ENCODE measurements at regions of chr1 and their contacts with region 1.

Region 1: DNA sequence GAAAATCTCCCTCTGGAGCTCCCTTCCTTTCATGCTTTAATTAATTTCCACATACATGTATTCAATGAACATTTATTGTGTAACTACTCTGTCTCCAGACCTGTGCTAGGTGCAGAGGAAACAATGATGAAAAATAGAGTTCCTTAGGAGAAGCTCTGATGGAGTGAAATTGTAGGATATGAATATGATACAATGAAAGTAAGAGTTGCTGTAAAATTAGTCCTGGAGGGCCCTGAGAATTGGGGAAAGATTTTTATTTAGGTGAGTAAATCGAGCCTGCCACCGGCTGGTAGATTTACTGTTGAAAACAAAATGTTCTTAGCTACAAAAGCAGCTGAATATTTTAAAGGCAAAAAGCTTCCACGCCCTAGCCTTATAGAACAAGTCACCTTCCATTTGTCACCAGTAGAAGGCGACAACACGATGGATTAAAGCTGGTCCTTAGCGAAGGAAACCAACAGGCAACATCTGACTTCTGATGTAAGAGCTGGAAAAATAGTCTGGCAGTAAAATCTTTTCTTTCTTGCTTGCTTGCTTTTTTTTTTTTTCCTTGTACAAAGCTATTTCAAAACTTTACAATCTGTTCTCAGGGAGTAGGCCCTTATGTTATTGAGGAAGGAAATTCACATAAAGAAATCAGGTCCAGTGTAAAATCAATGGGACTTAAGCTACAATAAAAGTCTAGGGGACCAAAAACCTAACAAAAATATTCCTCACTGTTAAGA is 82.0 kb upstream of the ROR1 start:
- DNase-seq: peak; percentile 88
- H3K4me3 Mint-ChIP-seq: no peak overlapping the region
- H3K27ac Mint-ChIP-seq: peak overlapping the region; percentile 28
- H3K4me1 Mint-ChIP-seq: peaks cover 17% of the 10 kb centered on the region
- H3K27me3 Mint-ChIP-seq: no peaks in the 10 kb centered on the region
- CTCF ChIP-seq: peak; percentile 63

Region 2: DNA sequence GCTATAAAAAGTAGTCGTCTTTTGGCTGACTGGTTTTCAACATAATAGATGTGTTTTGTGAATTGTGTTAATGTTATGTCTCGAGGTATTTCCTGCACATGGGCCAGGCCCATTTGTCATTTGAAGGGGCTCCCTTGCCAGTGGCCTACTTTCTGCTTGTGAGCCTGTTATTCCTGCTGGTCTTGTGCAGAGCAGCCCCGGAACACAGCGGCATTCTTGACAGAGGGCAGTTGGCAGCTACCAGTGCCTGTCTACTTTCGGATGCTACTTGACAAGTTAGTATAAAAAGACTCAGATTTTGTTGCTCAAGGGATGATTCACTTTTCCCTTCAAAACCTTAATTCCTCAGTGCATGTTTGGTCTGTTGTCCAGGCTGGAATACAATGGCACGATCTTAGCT is 70.2 kb before region 1 on chr1:
- CTCF ChIA-PET with region 1: interaction called, 15 read pairs
- POLR2A ChIA-PET with region 1: no interaction called
- intact Hi-C with region 1: no loop called
- DNase-seq: no peak
- H3K4me3 Mint-ChIP-seq: no peak overlapping the region
- H3K27ac Mint-ChIP-seq: no peak overlapping the region
- H3K4me1 Mint-ChIP-seq: peaks cover 27% of the 10 kb centered on the region
- H3K27me3 Mint-ChIP-seq: no peaks in the 10 kb centered on the region
- CTCF ChIP-seq: no peak

Region 3: GRCh38 chr1:63674238-63674864 is 17.5 kb before region 1 on chr1:
- CTCF ChIA-PET with region 1: interaction called, 15 read pairs
- POLR2A ChIA-PET with region 1: no interaction called
- intact Hi-C with region 1: no loop called
- DNase-seq: peak; percentile 90
- H3K4me3 Mint-ChIP-seq: no peak overlapping the region
- H3K27ac Mint-ChIP-seq: no peak overlapping the region
- H3K4me1 Mint-ChIP-seq: peaks cover 11% of the 10 kb centered on the region
- H3K27me3 Mint-ChIP-seq: no peaks in the 10 kb centered on the region
- CTCF ChIP-seq: peak; percentile 58

Region 4: DNA sequence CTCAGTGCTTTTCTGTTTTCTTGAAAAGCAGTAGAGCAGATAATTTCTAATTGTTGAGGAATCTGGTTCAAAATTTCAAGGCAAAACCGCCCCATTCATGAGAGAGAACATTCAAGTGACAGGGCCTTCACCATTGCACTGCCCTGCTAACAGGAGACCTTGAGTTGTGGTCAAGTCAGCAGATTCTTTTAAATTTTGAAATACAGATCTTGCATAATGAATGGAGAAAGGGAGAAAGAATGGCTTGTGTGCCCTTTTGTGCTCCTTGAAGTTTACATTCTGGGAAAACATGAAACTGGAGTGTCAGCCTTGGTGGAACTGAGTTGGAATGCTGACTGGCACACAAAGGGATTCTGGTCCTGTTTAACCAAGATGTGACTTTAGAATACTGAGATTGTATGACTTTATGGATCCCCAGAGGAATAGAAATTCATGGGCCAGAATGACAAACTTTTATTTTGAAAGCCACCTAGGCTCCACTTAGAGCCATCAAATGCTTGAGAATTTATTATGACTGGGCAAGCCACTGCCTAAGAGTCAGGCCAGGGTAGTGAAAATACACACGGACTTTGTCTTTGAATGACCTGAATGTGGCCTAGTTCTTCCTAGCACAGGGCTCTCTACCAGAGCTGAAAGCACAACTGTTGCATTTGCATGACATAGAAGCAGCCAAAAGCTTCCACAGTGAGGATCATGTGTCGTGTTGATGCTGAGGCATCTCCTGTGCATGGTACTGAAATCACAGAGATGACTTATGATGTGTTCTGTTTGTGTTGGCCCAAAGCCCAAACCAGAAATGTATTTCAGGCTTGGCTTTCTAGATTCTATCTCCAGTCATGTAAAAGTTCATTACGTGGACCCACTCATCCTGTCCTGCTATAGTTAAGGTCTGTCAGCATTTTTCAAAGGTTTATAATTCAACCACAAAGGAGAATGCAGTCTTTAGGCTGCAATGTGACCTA is 347.4 kb after region 1 on chr1:
- CTCF ChIA-PET with region 1: interaction called, 4 read pairs
- POLR2A ChIA-PET with region 1: interaction called, 5 read pairs
- intact Hi-C with region 1: loop called (anchors 5 kb)
- DNase-seq: peak; percentile 98
- H3K4me3 Mint-ChIP-seq: peak overlapping the region; percentile 28
- H3K27ac Mint-ChIP-seq: peak overlapping the region; percentile 82
- H3K4me1 Mint-ChIP-seq: peaks cover 64% of the 10 kb centered on the region
- H3K27me3 Mint-ChIP-seq: no peaks in the 10 kb centered on the region
- CTCF ChIP-seq: no peak

Region 5: GRCh38 chr1:64251971-64252370 is 560.1 kb after region 1 on chr1:
- CTCF ChIA-PET with region 1: interaction called, 14 read pairs
- POLR2A ChIA-PET with region 1: interaction called, 4 read pairs
- intact Hi-C with region 1: no loop called
- DNase-seq: no peak
- H3K4me3 Mint-ChIP-seq: no peak overlapping the region
- H3K27ac Mint-ChIP-seq: no peak overlapping the region
- H3K4me1 Mint-ChIP-seq: no peaks in the 10 kb centered on the region
- H3K27me3 Mint-ChIP-seq: peaks cover 12% of the 10 kb centered on the region
- CTCF ChIP-seq: no peak